ENCODE measurements at regions of chr16 and their contacts with region 1.

Region 1: DNA sequence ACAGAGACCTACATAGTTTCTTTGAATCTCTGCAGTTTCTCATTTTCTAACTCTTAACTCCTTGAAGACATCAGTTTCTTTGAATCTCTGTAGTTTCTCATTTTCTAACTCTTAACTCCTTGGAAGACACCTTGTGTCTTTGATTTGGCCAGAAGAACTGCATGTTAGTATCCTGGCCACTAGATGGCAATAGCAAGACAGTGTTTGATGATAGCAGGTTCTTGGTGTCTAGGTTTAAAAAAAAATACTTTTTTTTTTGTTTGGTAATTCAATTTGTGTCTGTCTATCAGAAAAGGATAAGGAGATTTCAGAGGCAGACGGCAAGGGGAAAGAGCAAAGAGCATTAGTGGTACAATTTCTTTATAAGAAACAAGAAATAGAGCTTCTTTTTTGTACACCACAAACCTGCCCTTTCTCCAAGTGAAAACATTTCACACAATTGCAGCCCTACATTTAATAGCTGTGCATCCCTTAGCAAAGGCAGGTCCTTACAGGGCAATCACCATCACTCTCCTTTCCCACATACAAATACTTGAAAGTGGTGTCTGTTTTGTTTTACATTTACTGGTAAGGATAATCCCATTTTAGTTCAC is 1324.9 kb upstream of the CDH8 start:
- DNase-seq: no peak
- ATAC-seq: no peak

Region 2: DNA sequence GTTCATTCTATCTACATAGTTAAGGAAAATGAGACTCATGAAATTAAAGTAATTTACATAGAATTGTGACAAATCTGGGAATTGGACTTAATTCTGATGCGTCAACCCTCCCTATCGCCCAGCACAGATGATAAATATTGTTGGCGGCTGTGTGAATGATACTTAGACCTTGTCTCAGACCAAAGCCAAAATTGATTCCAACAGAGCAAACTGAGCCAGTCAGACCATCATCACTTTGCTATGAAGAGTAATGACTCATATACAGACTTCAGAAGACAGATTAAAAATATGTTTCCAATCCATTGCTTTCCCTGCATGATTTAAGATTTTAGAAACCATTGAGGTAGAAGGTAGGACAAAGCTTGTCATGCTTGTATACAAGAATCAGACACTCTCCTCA is 168.1 kb before region 1 on chr16:
- intact Hi-C with region 1: no loop called
- DNase-seq: no peak
- ATAC-seq: no peak

Region 3: DNA sequence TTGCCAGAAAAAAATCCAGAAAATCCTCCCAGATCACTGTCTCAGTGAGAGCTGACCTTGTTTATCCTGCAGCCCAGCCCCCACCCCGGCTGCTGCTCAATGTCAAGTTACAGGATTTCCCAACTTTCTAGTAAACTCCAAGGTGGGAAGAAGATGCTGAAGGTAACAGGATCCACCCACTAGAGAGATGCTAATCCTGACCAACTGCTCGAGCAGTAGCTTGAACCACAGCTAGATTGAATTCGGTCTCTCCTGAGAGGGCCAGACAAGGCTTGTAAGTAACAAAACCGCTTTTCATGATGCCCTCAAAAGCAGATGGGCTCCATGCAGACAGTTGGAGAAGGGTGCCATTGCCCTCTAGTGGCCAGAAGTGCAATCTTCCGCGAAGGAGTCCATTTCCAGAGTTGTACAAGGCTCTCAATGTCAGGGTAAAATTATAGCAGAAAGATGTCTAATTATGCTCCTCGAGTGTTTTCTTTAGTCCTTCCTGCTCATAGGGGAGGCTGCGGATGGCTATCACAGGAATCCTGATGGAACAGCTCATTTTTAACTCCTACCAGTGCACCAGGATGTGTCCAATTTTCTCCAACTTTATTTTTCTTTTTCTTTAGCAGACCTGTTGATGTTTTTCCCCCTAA is 1756.8 kb after region 1 on chr16:
- intact Hi-C with region 1: loop called (anchors 10 kb)
- DNase-seq: peak; percentile 84
- ATAC-seq: peak; percentile 53

Measured in sciatic nerve (tissue), 2 donors.